Natural killer cell (primary cell): ENCODE measurements at regions of chr16 and their contacts with region 1.

Region 1: DNA sequence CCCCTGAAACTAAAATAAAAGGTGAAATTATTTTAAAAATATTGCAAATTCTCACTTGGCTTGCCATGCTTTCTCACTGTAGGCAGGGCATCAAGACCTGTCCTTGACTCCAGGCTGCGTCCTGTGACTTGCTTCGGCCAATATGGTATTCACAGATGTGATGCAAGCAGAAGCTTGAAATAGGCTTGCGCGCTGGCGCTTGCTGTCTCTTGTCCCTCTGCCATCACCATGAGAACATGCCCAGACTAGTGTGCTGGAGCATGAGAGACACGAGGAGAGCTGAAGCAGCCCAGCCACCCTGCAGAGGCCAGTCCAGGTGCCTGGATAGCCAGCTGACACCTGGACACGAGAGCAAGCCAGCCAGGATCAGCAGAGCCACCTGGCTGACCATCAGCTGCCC is 21.8 kb upstream of the ZKSCAN2 start:
- DNase-seq: no peak
- ATAC-seq: no peak
- H3K4me3 ChIP-seq: no peak overlapping the region
- H3K4me3 Mint-ChIP-seq: no peak overlapping the region
- H3K27ac ChIP-seq: no peak overlapping the region
- H3K27ac Mint-ChIP-seq: no peak overlapping the region
- H3K4me1 ChIP-seq: no peaks in the 10 kb centered on the region
- H3K4me1 Mint-ChIP-seq: peaks cover 0 to 5% of the 10 kb centered on the region in 2 donors
- H3K27me3 ChIP-seq: no peaks in the 10 kb centered on the region
- H3K27me3 Mint-ChIP-seq: no peaks in the 10 kb centered on the region
- CTCF ChIP-seq: no peak

Region 2: GRCh38 chr16:27109666-27110523 is 1830.4 kb after region 1 on chr16:
- intact Hi-C with region 1: loop called (anchors 5 kb)
- DNase-seq: peak; percentile 77 to 80
- ATAC-seq: peak; percentile 82 to 98 (median 97)
- H3K4me3 ChIP-seq: no peak overlapping the region
- H3K4me3 Mint-ChIP-seq: peak overlapping the region; percentile 80
- H3K27ac ChIP-seq: no peak overlapping the region
- H3K27ac Mint-ChIP-seq: no peak overlapping the region
- H3K4me1 ChIP-seq: peaks cover 16% of the 10 kb centered on the region
- H3K4me1 Mint-ChIP-seq: peaks cover 0 to 9% of the 10 kb centered on the region in 2 donors
- H3K27me3 ChIP-seq: no peaks in the 10 kb centered on the region
- H3K27me3 Mint-ChIP-seq: peaks cover 3 to 10% of the 10 kb centered on the region in 2 donors
- CTCF ChIP-seq: peak; percentile 96